ENCODE measurements at regions of chr1 and their contacts with region 1.

Region 1: GRCh38 chr1:161738627-161739287 is 10.8 kb upstream of the DUSP12 start:
- DNase-seq: peak; percentile 80
- ATAC-seq: peak; percentile 69
- H3K4me3 ChIP-seq: no peak overlapping the region
- H3K4me3 Mint-ChIP-seq: peak overlapping the region; percentile 74
- H3K27ac ChIP-seq: peak overlapping the region; percentile 74 to 77
- H3K27ac Mint-ChIP-seq: peak overlapping the region; percentile 92
- H3K4me1 ChIP-seq: peaks cover 34 to 35% of the 10 kb centered on the region in 2 donors
- H3K4me1 Mint-ChIP-seq: peaks cover 41% of the 10 kb centered on the region
- H3K27me3 ChIP-seq: no peaks in the 10 kb centered on the region
- H3K27me3 Mint-ChIP-seq: no peaks in the 10 kb centered on the region
- CTCF ChIP-seq: peak; percentile 37

Region 2: DNA sequence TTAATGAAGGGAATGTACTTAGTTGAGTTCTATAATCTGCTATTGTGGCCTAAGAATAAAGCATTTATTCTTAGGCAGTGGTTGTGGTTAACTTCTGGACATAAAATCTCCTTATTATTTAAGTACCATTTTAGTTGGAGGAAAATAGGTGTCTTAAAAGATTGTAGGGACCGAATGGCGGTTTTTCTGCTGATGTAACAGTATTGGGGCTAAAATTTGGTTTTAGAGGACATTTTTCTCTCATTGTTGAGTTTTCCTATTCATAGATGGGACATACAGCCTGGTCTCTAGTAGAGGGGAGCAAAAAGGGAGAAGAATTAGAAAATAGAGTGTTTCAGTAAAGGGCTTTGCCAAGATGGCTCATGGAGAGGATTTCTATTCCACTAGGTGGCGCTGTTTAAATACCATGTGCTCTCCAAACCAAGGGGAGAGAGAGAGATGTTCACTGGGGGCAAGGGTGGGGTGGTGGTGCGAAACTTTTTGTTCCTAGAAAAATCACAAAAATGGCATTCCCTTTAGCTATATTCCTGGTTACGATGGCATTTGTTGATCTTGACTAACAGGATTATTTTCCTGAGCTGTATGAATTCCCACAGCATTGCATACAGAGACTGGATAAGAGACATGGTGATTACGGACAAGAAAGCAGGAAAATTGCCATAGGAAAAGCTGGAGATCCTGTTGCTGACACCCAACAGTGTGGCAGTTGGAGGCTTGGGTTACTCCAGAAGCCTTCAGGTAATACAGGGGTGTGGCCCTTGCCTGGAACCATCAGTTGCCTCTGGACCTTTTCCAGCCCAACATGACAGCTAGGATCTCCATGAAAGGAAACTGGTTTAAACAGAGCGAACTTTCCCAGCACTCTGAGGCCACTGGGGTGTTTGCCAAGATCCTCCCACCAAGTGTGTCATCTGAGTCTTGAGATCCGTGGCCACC is 251.7 kb before region 1 on chr1:
- CTCF ChIA-PET with region 1: interaction called, 80 read pairs
- POLR2A ChIA-PET with region 1: no interaction called
- intact Hi-C with region 1: loop called (anchors 1 kb)
- DNase-seq: peak; percentile 80
- ATAC-seq: peak; percentile 78
- H3K4me3 ChIP-seq: no peak overlapping the region
- H3K4me3 Mint-ChIP-seq: no peak overlapping the region
- H3K27ac ChIP-seq: no peak overlapping the region
- H3K27ac Mint-ChIP-seq: no peak overlapping the region
- H3K4me1 ChIP-seq: peaks cover 3 to 6% of the 10 kb centered on the region in 2 donors
- H3K4me1 Mint-ChIP-seq: peaks cover 8% of the 10 kb centered on the region
- H3K27me3 ChIP-seq: peaks cover 0 to 36% (median 7%) of the 10 kb centered on the region in 4 experiments
- H3K27me3 Mint-ChIP-seq: peaks cover 36% of the 10 kb centered on the region
- CTCF ChIP-seq: peak; percentile 82

Region 3: DNA sequence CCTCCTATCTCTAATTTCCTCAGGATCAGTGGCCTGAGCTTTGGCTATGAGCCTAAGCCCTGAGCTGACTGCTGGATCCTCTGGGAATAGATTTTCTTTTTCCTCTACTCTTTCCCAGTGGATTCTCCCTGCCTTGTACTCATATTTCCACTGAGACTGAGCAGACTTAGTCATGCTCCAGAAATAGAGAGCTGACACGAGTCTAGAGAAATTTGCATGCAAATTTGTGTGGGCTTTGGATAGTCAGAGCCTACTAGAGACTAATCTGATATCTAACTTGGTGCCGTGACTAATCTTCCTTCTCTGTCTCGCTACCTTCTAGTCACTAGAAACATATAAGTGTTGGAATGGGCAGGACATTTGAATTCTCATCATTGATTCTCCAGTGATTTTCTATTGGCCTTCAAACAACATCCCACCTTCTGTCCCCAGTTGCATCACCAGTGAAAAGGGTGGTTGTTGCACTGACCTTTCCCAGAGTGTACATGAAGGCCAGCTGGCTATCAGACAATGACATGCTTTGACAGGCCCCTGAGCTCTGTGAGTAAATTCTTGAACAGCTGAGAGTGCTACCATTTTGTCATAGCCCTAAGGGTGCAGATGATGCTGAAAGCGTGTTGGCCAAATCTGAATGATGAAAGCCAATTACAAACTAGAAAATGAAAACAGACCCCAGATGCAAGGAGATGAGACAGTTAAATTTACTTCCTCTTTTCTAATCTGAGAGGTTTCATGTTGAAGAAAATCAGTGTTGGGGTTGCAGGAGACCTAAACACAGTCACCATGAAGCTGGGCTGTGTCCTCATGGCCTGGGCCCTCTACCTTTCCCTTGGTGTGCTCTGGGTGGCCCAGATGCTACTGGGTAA is 32.0 kb before region 1 on chr1 and contains the start of gene FCRLA:
- CTCF ChIA-PET with region 1: interaction called, 85 read pairs
- POLR2A ChIA-PET with region 1: interaction called, 12 read pairs
- intact Hi-C with region 1: loop called (anchors 1 kb)
- DNase-seq: peak; percentile 75
- ATAC-seq: peak; percentile 57
- H3K4me3 ChIP-seq: peak within 1 kb of the TSS; percentile 61 to 80 (median 69)
- H3K4me3 Mint-ChIP-seq: peak within 1 kb of the TSS; percentile 79
- H3K27ac ChIP-seq: peak within 1 kb of the TSS; percentile 80 to 81
- H3K27ac Mint-ChIP-seq: no peak within 1 kb of the TSS
- H3K4me1 ChIP-seq: peaks cover 61 to 67% of the 10 kb centered on the region in 2 donors
- H3K4me1 Mint-ChIP-seq: peaks cover 27% of the 10 kb centered on the region
- H3K27me3 ChIP-seq: no peaks in the 10 kb centered on the region
- H3K27me3 Mint-ChIP-seq: no peaks in the 10 kb centered on the region
- CTCF ChIP-seq: no peak
- total RNA-seq, gene FCRLA: 140 and 142 TPM in 2 replicates

Region 4: GRCh38 chr1:161718559-161719324 is 20.0 kb before region 1 on chr1:
- CTCF ChIA-PET with region 1: interaction called, 5 read pairs
- POLR2A ChIA-PET with region 1: interaction called, 3 read pairs
- intact Hi-C with region 1: loop called (anchors 1 kb)
- DNase-seq: peak; percentile 81
- ATAC-seq: peak; percentile 88
- H3K4me3 ChIP-seq: peak overlapping the region in 4 of 5 experiments; percentile 18 to 63 (median 32)
- H3K4me3 Mint-ChIP-seq: peak overlapping the region; percentile 62
- H3K27ac ChIP-seq: peak overlapping the region; percentile 16 to 52
- H3K27ac Mint-ChIP-seq: peak overlapping the region; percentile 74
- H3K4me1 ChIP-seq: peaks cover 44 to 46% of the 10 kb centered on the region in 2 donors
- H3K4me1 Mint-ChIP-seq: peaks cover 53% of the 10 kb centered on the region
- H3K27me3 ChIP-seq: peaks cover 0 to 4% (median 0%) of the 10 kb centered on the region in 4 experiments
- H3K27me3 Mint-ChIP-seq: no peaks in the 10 kb centered on the region
- CTCF ChIP-seq: no peak

Region 5: GRCh38 chr1:161726596-161727457 is 11.9 kb before region 1 on chr1:
- CTCF ChIA-PET with region 1: interaction called, 142 read pairs
- POLR2A ChIA-PET with region 1: interaction called, 82 read pairs
- intact Hi-C with region 1: loop called (anchors 1 kb)
- DNase-seq: peak; percentile 81
- ATAC-seq: peak; percentile 72
- H3K4me3 ChIP-seq: peak overlapping the region; percentile 64 to 88 (median 85)
- H3K4me3 Mint-ChIP-seq: peak overlapping the region; percentile 100
- H3K27ac ChIP-seq: peak overlapping the region; percentile 62 to 73
- H3K27ac Mint-ChIP-seq: peak overlapping the region; percentile 97
- H3K4me1 ChIP-seq: peaks cover 21 to 34% of the 10 kb centered on the region in 2 donors
- H3K4me1 Mint-ChIP-seq: peaks cover 49% of the 10 kb centered on the region
- H3K27me3 ChIP-seq: peaks cover 0 to 7% (median 0%) of the 10 kb centered on the region in 4 experiments
- H3K27me3 Mint-ChIP-seq: no peaks in the 10 kb centered on the region
- CTCF ChIP-seq: no peak

Region 6: DNA sequence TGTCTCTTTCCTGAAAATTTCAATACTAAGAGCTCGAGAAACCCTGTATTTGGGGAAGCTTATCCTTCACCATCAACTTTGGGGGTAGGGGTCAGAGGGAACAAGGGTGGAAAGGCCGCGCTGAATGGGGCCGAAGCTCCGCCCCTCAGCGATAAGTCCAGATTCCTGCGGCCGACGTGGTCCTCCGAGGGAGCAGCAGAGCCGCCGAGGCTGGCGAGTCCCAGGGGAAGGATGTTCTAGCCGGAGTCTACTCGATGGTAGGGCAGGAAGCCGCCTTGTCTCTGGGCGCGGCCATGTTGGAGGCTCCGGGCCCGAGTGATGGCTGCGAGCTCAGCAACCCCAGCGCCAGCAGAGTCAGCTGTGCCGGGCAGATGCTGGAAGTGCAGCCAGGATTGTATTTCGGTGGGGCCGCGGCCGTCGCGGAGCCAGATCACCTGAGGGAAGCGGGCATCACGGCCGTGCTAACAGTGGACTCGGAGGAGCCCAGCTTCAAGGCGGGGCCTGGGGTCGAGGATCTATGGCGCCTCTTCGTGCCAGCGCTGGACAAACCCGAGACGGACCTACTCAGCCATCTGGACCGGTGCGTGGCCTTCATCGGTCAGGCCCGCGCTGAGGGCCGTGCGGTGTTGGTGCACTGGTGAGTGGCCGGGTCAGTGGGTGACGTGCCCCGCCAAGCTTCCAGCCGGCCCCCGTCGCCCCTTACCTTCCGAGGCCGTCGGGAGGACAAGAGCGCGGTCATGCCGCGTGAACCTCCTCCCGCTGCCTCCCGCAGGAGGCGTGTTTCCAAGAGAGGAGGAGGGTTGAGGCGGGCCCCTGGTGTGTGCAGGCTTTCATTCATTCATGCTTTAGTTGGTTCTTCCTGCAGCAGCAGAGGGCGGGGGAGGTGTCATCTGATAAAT is 11.0 kb after region 1 on chr1 and contains the start of gene DUSP12:
- CTCF ChIA-PET with region 1: interaction called, 56 read pairs
- POLR2A ChIA-PET with region 1: interaction called, 14 read pairs
- intact Hi-C with region 1: no loop called
- DNase-seq: peak; percentile 93
- ATAC-seq: peak; percentile 98
- H3K4me3 ChIP-seq: peak within 1 kb of the TSS; percentile 59 to 94 (median 83)
- H3K4me3 Mint-ChIP-seq: peak within 1 kb of the TSS; percentile 100
- H3K27ac ChIP-seq: peak within 1 kb of the TSS; percentile 29 to 66
- H3K27ac Mint-ChIP-seq: peak within 1 kb of the TSS; percentile 97
- H3K4me1 ChIP-seq: peaks cover 18 to 27% of the 10 kb centered on the region in 2 donors
- H3K4me1 Mint-ChIP-seq: peaks cover 32% of the 10 kb centered on the region
- H3K27me3 ChIP-seq: no peaks in the 10 kb centered on the region
- H3K27me3 Mint-ChIP-seq: peaks cover 8% of the 10 kb centered on the region
- CTCF ChIP-seq: no peak
- total RNA-seq, gene DUSP12: 41.2 and 41.9 TPM in 2 replicates